ENCODE measurements at regions of chr2 and their contacts with region 1.

Region 1: GRCh38 chr2:189115126-189115525 is 64.4 kb downstream of the COL5A2 start:
- DNase-seq: peak; percentile 69
- H3K4me3 ChIP-seq: no peak overlapping the region
- H3K27ac ChIP-seq: no peak overlapping the region
- H3K4me1 ChIP-seq: peaks cover 35% of the 10 kb centered on the region
- H3K27me3 ChIP-seq: no peaks in the 10 kb centered on the region
- CTCF ChIP-seq: peak; percentile 56

Region 2: GRCh38 chr2:188450732-188451483 is 664.2 kb before region 1 on chr2:
- CTCF ChIA-PET with region 1: no interaction called
- POLR2A ChIA-PET with region 1: no interaction called
- intact Hi-C with region 1: no loop called
- DNase-seq: peak; percentile 43
- H3K4me3 ChIP-seq: no peak overlapping the region
- H3K27ac ChIP-seq: no peak overlapping the region
- H3K4me1 ChIP-seq: peaks cover 13% of the 10 kb centered on the region
- H3K27me3 ChIP-seq: no peaks in the 10 kb centered on the region
- CTCF ChIP-seq: no peak

Region 3: GRCh38 chr2:189142893-189143759 is 28.0 kb after region 1 on chr2:
- CTCF ChIA-PET with region 1: interaction called, 14 read pairs
- POLR2A ChIA-PET with region 1: no interaction called
- intact Hi-C with region 1: no loop called
- DNase-seq: peak; percentile 82
- H3K4me3 ChIP-seq: no peak overlapping the region
- H3K27ac ChIP-seq: peak overlapping the region; percentile 94
- H3K4me1 ChIP-seq: peaks cover 75% of the 10 kb centered on the region
- H3K27me3 ChIP-seq: no peaks in the 10 kb centered on the region
- CTCF ChIP-seq: peak; percentile 97

Region 4: DNA sequence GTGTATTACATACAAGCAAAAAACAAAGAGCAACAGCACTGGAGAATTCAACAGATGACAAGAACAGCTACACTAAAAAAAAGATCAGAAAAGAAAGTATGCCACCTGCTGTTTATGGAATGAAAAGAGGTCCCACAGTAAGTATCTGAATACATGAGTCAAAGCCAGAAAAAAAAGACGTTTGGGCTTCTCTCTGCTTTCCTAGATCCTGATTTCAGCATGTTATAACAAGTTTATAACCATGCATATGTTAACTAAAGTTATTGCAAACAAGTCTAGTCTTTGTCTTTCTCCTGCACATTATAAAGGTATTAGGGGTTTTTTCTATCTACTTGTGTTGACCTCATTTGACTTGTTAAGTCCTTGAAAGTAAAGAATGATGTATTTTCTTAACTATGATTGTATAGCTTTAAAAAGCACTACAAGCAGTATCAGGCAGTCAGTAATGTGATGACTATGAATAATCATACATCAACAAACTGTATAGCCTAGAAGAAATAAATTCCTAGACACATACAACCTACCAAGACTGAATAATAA is 172.9 kb after region 1 on chr2:
- CTCF ChIA-PET with region 1: interaction called, 3 read pairs
- POLR2A ChIA-PET with region 1: no interaction called
- intact Hi-C with region 1: loop called (anchors 1 kb)
- DNase-seq: peak; percentile 91
- H3K4me3 ChIP-seq: no peak overlapping the region
- H3K27ac ChIP-seq: no peak overlapping the region
- H3K4me1 ChIP-seq: peaks cover 17% of the 10 kb centered on the region
- H3K27me3 ChIP-seq: no peaks in the 10 kb centered on the region
- CTCF ChIP-seq: peak; percentile 73

Region 5: DNA sequence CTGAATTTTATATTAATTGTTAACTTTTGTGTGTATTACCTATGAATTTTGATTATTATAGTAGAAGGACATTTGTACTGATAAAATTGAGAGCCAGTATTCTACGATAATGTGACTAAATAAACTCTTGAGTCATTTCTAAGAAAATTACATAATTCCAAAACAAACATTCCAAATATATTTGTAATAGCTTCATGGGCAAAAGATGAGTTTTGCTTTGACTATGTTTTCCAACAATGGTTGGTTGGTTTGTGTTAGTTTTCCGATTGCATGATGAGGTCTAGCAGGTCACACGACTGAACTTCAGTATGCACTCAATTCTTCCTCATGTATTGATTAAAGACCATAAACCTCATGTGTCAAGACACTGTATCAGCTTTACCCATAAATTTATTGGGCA is 254.4 kb after region 1 on chr2:
- CTCF ChIA-PET with region 1: no interaction called
- POLR2A ChIA-PET with region 1: no interaction called
- intact Hi-C with region 1: no loop called
- DNase-seq: no peak
- H3K4me3 ChIP-seq: no peak overlapping the region
- H3K27ac ChIP-seq: no peak overlapping the region
- H3K4me1 ChIP-seq: no peaks in the 10 kb centered on the region
- H3K27me3 ChIP-seq: no peaks in the 10 kb centered on the region
- CTCF ChIP-seq: no peak

Measured in A673 (cell line).